Gastrocnemius medialis (tissue), 4 donors: ENCODE measurements at regions of chr1 and their contacts with region 1.

Region 1: DNA sequence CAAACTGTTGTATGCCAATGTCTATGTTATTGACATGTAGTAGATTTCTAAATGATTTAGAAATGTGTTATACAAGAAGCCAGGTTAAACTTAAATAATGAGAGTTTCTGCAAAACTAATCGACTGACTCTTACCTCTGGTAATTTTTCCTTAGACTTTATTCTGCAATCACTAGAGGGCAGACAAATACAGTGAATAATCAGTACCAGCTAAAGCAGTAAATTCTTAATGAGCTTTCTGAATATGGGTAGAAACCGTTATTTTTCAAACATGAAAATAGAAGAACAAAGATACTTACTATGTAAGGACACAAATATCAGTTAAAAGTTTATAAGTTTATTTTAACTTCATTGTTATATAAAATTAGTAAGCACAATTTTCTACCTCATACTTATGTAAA is 97.9 kb upstream of the RGS1 start:
- DNase-seq: no peak
- ATAC-seq: peak in 1 of 2 donors; percentile 45
- H3K4me3 ChIP-seq: no peak overlapping the region
- H3K27ac ChIP-seq: no peak overlapping the region
- H3K4me1 ChIP-seq: no peaks in the 10 kb centered on the region
- H3K27me3 ChIP-seq: no peaks in the 10 kb centered on the region
- CTCF ChIP-seq: peak in 2 of 5 experiments; percentile 17 to 26
- POLR2A ChIP-seq: no peak

Region 2: DNA sequence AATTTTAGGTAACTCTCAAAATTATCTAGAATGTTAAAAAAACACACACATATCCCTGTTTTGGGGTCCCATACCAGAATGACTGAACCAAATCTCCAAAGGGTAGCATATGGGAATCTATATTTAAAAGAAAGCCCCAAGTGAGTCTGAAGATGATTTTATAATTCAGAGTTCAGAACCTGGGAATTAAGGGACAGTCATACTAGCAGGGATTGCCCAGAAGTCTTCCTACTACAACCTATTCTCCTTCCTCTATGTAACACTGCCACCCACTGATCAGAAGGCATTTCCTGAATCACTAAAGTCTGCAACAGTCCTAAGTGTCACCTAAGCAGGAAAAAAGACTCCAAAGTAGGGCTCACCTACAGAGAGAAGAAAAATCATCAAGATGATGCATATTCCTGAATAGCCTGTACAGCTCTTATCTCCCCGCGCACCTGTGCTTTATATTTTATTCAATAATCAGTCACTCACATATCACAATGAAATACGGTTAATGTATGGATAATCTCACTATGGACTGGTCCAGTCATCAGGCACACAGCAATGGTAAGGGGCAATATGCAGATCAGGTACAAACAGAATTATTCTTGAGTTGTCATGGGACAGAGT is 102.8 kb after region 1 on chr1:
- in situ Hi-C with region 1: loop called in 1 of 4 experiments (anchors 10 kb)
- intact Hi-C with region 1: no loop called
- DNase-seq: no peak
- ATAC-seq: no peak
- H3K4me3 ChIP-seq: no peak overlapping the region
- H3K27ac ChIP-seq: no peak overlapping the region
- H3K4me1 ChIP-seq: no peaks in the 10 kb centered on the region
- H3K27me3 ChIP-seq: no peaks in the 10 kb centered on the region
- CTCF ChIP-seq: no peak
- POLR2A ChIP-seq: no peak

Region 3: GRCh38 chr1:192609110-192610079 is 131.8 kb after region 1 on chr1:
- in situ Hi-C with region 1: loop called in 3 of 4 experiments (anchors 5 to 10 kb)
- intact Hi-C with region 1: loop called (anchors 5 kb)
- DNase-seq: peak; percentile 9 to 25
- ATAC-seq: no peak
- H3K4me3 ChIP-seq: no peak overlapping the region
- H3K27ac ChIP-seq: no peak overlapping the region
- H3K4me1 ChIP-seq: peaks cover 0 to 3% of the 10 kb centered on the region in 2 donors
- H3K27me3 ChIP-seq: no peaks in the 10 kb centered on the region
- CTCF ChIP-seq: no peak
- POLR2A ChIP-seq: no peak

Region 4: GRCh38 chr1:192839164-192840035 is 361.8 kb after region 1 on chr1:
- in situ Hi-C with region 1: no loop called
- intact Hi-C with region 1: no loop called
- DNase-seq: no peak
- ATAC-seq: no peak
- H3K4me3 ChIP-seq: no peak overlapping the region
- H3K27ac ChIP-seq: no peak overlapping the region
- H3K4me1 ChIP-seq: no peaks in the 10 kb centered on the region
- H3K27me3 ChIP-seq: no peaks in the 10 kb centered on the region
- CTCF ChIP-seq: no peak
- POLR2A ChIP-seq: no peak